ENCODE measurements at regions of chr12 and their contacts with region 1.

Region 1: GRCh38 chr12:93569656-93570551 is 2.6 kb upstream of the SOCS2 start:
- DNase-seq: peak; percentile 90
- ATAC-seq: peak; percentile 81 to 89 (median 83)
- H3K4me3 ChIP-seq: peak overlapping the region; percentile 94
- H3K27ac ChIP-seq: peak overlapping the region; percentile 89
- H3K4me1 ChIP-seq: no peaks in the 10 kb centered on the region
- H3K27me3 ChIP-seq: no peaks in the 10 kb centered on the region
- CTCF ChIP-seq: peak; percentile 79

Region 2: GRCh38 chr12:93587611-93588010 is 17.7 kb after region 1 on chr12:
- intact Hi-C with region 1: no loop called
- DNase-seq: no peak
- ATAC-seq: no peak
- H3K4me3 ChIP-seq: no peak overlapping the region
- H3K27ac ChIP-seq: no peak overlapping the region
- H3K4me1 ChIP-seq: peaks cover 4% of the 10 kb centered on the region
- H3K27me3 ChIP-seq: no peaks in the 10 kb centered on the region
- CTCF ChIP-seq: no peak

Region 3: GRCh38 chr12:93668919-93669418 is 99.1 kb after region 1 on chr12:
- intact Hi-C with region 1: loop called in 1 of 2 experiments (anchors 10 kb)
- DNase-seq: no peak
- ATAC-seq: no peak
- H3K4me3 ChIP-seq: no peak overlapping the region
- H3K27ac ChIP-seq: no peak overlapping the region
- H3K4me1 ChIP-seq: peaks cover 4% of the 10 kb centered on the region
- H3K27me3 ChIP-seq: no peaks in the 10 kb centered on the region
- CTCF ChIP-seq: no peak

Region 4: DNA sequence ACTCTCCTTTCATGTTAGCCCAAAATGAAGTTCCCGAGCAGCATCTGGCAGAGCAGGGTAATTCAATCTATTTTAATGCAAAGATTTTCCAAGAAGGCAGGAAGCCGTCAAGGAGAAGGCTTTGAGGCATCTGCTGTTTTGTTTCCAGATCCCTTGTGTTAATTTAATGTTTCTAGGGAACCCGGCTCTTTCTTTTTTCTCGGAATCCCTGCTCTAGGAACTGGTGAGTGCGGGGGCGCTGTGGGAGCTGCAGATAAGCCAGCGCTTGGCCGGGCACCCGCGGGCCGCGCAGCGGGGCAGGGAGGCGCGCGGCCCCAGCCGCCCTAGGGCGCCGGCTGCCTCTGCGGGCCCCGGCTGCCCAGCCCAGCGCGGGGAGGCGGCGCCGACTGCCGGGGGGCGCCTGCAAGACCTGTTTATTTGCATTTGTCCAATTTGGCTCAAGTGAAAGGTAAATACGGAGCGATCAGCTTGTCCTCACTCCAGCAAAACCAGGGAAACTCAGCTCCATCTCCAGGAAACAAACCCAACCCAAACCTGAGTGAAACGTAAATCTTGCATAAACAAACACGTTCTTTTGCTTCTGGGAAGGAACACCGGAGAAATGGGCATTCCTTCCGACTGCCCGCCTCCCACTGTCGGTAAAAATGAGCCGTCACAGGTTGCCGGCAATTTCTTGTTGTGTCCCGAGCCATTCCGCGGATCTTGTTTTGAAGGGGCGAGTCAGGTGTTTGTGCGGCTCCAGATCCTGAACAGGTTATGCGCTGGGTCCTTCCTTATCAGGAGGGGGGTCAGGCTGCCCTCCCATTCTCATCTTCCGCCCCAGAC is 172.4 kb after region 1 on chr12:
- intact Hi-C with region 1: loop called (anchors 1 to 5 kb)
- DNase-seq: peak; percentile 77 to 82
- ATAC-seq: peak; percentile 91 to 92 (median 92)
- H3K4me3 ChIP-seq: peak overlapping the region; percentile 81
- H3K27ac ChIP-seq: peak overlapping the region; percentile 75
- H3K4me1 ChIP-seq: peaks cover 31% of the 10 kb centered on the region
- H3K27me3 ChIP-seq: no peaks in the 10 kb centered on the region
- CTCF ChIP-seq: peak; percentile 58

Region 5: GRCh38 chr12:93979189-93979588 is 409.3 kb after region 1 on chr12:
- intact Hi-C with region 1: loop called (anchors 5 to 10 kb)
- DNase-seq: no peak
- ATAC-seq: no peak
- H3K4me3 ChIP-seq: no peak overlapping the region
- H3K27ac ChIP-seq: no peak overlapping the region
- H3K4me1 ChIP-seq: peaks cover 10% of the 10 kb centered on the region
- H3K27me3 ChIP-seq: no peaks in the 10 kb centered on the region
- CTCF ChIP-seq: peak; percentile 46

Region 6: DNA sequence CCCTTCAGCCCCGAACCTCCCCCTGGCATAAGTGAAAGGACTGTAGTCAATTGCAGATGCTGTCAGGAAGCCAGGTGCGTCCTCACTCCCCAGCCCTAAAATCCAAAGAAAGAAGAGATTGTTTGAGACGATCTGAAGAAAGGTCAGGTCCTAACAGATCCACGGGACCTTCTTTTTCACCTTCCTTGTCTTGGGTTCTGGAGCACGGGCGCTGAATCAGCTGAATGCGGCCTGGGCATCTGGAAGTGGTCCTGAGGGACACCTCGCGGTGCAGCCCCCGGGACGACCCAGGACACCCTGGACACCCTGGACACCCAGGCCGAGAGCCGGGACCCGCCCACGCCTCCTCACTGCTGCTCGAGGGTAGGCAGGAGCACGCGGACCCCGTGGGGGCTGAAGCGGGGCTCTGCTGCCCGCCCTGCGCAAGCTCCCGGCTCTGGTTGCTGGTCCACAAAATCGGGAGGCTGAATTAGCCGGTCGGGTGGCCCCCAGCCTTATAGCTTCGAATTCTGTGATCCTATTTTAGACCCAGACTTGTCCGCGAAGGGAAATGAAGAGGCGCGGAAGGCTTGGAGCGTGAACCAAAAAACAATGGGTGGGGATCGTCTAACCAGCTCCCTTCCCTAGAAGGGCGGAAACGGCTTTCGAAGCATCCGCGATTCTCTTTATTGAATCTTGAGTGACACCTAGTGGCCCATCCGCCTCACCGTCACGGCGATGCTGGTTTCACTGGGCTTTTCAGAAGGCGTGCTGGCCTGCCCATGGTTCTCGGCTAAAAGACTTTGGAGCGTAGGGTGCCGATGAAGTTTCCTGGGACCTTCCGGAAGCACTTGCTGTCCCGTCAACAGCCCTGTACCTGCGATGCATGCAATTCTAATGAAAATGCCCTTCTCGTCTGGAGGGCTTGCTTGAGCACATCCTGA is 532.1 kb after region 1 on chr12:
- intact Hi-C with region 1: loop called (anchors 1 to 5 kb)
- DNase-seq: peak; percentile 82 to 89
- ATAC-seq: peak; percentile 83 to 92 (median 84)
- H3K4me3 ChIP-seq: peak overlapping the region; percentile 72
- H3K27ac ChIP-seq: no peak overlapping the region
- H3K4me1 ChIP-seq: peaks cover 6% of the 10 kb centered on the region
- H3K27me3 ChIP-seq: peaks cover 0 to 3% (median 0%) of the 10 kb centered on the region in 3 donors
- CTCF ChIP-seq: peak; percentile 84

Measured in psoas muscle (tissue), 8 donors.